Right ventricle myocardium superior (tissue), 1 donor: ENCODE measurements at regions of chr19 and their contacts with region 1.

Region 1: DNA sequence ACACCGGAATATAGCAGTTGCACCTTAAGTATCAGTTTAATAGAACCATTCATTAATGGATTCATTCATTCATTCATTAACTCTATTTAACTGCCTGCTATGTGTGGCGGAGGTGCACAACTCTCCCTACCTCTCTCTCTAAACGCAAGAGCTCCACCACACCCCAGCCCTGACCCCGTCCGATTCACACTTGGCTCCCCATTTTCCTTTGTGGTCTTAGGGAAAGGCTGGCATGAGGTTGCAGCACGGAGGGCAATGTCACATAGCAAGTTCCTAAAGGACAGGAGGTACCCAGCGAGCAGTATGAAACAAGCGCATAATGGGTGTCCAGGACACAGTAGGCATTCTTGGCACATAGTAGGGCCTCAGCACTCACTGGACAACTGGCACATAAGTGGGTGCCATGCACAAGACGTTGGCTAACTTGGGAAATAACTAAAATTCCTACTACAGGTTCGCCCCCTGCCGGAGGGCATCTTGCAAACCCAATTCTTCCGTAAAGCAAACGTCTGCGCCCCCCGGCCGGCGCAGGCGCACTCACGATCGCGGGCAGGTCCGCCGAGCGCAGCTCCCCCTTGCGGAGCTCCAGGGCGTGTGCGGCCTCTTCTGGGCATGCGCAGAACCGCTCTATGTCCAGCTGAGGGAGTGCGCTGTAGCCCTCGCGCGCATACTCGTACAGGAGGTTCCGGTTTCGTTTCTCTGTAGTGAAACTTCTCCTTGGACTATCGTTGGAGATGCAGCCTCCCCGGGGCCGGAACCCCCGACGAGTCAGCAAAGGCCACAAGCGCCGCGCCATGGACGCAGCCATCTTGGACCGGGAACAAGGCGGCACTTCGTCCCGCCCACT is at the start of gene SARS2:
- DNase-seq: peak; percentile 95
- ATAC-seq: peak; percentile 94
- total RNA-seq, gene SARS2: 14.5 TPM

Region 2: GRCh38 chr19:38402967-38403861 is 526.9 kb before region 1 on chr19 and contains the start of gene FAM98C:
- intact Hi-C with region 1: loop called (anchors 10 kb)
- DNase-seq: peak; percentile 98
- ATAC-seq: peak; percentile 99
- total RNA-seq, gene FAM98C: 10.5 TPM

Region 3: DNA sequence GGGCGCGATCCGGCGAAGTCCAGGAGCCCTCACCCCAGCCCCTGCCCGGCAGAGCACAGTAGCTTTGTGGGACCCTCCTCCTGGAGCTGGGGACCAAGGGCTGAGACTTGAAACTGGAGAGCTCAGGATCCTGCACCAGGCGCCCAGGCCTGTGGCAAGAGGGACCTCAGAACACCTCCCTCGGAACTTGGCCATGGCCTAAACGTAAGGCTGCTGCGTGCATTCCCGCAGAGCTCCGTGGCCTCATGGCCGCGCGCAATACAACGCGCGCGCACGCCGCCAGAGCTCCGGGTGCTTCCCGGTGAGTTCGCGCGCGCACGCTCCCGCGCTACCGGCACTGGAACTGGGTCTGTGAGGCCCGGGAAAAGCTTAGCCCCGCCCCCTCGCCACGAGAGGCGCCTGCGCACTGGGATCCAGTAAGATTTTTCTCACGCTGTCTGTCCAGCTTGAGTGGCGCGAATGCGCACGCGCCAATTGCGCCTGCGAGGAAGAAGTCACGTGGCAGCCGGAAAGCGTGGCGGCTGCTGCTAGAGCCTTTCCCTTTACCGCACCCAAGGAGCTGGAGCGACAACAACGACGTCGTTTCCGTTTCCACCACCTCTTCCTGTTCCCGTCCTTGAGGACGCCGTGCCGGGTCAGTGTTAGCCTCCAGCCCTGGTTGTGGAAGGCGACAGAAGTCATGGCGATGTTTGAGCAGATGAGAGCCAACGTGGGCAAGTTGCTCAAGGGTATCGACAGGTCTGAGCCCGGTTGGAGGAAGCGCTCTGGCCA is 311.4 kb before region 1 on chr19 and contains the start of gene EIF3K:
- intact Hi-C with region 1: loop called (anchors 10 kb)
- DNase-seq: peak; percentile 100
- ATAC-seq: peak; percentile 98
- total RNA-seq, gene EIF3K: 644 TPM